AG04450 (cell line): ENCODE measurements at regions of chr22 and their contacts with region 1.

Region 1: GRCh38 chr22:27885977-27886842 is 32.8 kb downstream of the PITPNB start:
- DNase-seq: peak; percentile 91
- H3K4me3 ChIP-seq: no peak overlapping the region
- H3K27ac ChIP-seq: peak overlapping the region; percentile 92
- H3K27me3 ChIP-seq: no peaks in the 10 kb centered on the region
- CTCF ChIP-seq: peak; percentile 82

Region 2: DNA sequence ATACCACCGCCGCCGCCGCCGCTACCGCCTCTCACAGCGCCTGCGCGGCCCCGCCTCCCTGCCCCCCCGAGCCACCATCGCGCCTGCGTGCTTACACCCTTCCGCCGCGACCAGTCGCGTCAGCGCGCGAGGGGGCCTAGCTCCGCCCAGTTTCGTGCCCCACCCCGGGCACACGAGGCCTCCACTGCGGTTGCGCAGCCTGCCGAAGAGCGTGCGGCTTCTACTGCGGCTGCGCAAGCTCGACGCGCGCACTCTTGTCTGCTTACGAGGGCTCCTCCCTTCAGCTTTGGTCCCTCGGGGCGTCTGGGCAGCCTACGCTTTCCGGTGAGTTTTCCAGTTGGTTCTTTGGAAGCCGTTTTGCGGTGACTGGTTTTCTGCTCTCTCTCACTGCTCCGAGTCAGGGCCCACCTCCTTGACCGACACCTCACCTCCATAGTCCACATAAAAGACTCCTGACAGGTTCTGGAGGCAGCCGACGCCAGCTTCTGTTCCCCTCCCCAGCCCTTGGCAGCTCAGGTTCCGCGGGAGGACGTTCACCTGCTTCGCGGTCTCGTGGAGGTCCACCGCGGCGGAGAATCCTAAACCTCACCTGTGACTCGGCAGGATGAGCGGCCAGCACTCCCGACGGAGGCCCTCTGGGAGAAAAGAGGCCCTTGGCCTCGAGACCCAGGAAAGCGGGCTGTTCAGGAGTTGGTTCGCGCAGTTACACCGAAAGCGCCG is 33.2 kb after region 1 on chr22 and contains the start of gene PITPNB:
- CTCF ChIA-PET with region 1: interaction called, 4 read pairs
- POLR2A ChIA-PET with region 1: interaction called, 17 read pairs
- DNase-seq: peak; percentile 95
- H3K4me3 ChIP-seq: peak within 1 kb of the TSS; percentile 90
- H3K27ac ChIP-seq: peak within 1 kb of the TSS; percentile 97
- H3K27me3 ChIP-seq: no peaks in the 10 kb centered on the region
- CTCF ChIP-seq: no peak
- polyA plus RNA-seq, gene PITPNB: 103 and 119 TPM in 2 replicates

Region 3: DNA sequence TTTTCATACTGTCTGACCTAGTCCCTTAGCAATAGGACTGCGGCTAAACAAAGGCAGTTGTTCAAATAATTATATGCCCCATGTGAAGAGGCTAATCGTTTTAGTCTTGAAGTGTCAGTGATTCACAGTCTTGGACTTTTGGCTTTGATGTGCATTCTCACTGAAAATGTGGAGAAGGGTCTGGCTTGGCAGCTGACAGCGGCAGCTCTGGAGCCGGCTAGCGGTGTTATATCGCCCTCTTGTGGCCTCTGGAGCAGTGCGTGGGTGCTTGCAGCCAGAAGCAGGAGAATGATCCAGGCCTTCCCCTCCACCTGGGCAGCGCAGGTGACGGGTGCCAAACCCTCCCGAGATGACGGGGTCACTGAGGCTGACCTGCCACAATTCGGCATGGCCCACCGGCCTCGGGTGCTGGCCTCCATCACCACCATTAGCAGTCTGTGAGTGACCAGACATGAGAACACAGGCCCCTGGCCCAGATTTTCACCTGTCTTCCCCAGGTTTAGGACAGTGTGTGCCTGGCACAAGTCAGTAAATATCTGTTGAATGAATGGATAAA is 123.1 kb after region 1 on chr22:
- CTCF ChIA-PET with region 1: interaction called, 17 read pairs
- POLR2A ChIA-PET with region 1: interaction called, 5 read pairs
- DNase-seq: peak; percentile 67
- H3K4me3 ChIP-seq: no peak overlapping the region
- H3K27ac ChIP-seq: no peak overlapping the region
- H3K27me3 ChIP-seq: no peaks in the 10 kb centered on the region
- CTCF ChIP-seq: peak; percentile 98